ENCODE measurements at regions of chr15 and their contacts with region 1.

Region 1: GRCh38 chr15:89206908-89207331 is 14.5 kb downstream of the RLBP1 start:
- DNase-seq: peak; percentile 61
- H3K4me3 Mint-ChIP-seq: no peak overlapping the region
- H3K27ac Mint-ChIP-seq: no peak overlapping the region
- H3K4me1 Mint-ChIP-seq: peaks cover 39% of the 10 kb centered on the region
- H3K27me3 Mint-ChIP-seq: peaks cover 4% of the 10 kb centered on the region

Region 2: GRCh38 chr15:88849376-88850072 is 357.4 kb before region 1 on chr15:
- intact Hi-C with region 1: no loop called
- DNase-seq: no peak
- H3K4me3 Mint-ChIP-seq: no peak overlapping the region
- H3K27ac Mint-ChIP-seq: no peak overlapping the region
- H3K4me1 Mint-ChIP-seq: peaks cover 7% of the 10 kb centered on the region
- H3K27me3 Mint-ChIP-seq: no peaks in the 10 kb centered on the region

Region 3: DNA sequence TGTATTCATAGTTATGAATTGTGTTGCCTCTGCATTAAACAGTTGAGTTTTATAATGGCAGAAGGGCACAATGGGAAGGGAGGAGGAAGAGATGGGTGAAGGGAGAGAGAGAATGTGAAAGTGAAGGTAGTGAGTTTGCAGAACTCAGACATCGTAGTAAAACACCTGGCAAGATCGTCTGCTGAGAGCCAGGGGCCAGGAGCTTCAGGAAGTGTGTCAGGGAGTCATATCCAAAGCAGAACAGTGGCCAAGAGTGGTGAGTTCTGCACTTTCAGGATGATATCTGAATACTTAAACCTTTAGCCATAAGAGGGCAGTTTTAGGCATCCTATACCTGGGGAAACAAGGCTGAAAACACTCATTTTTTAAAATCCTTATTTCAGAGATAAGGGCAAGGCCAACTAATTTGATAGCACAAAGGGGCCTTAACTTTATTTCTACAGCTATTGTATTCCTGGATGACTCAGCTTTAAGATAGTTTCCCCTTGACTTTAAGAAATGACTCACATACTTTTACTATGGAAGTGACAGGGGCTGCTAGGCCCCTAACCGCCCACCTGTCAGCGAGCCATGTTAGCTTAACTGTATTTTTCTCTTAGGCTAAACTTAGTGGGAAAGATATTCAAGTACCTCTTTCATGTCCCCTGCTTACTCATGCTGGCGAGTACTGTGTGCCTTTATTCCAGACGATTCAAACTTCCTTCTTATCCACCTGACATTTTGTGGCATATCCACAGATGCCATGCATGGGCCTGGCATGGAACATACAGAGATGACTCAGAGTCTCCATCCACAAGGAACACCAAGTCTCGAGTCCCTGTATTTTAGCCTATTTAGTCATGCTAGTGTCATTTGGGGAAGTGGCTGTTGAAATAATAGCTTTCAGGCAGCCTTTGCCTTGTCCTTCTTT is 39.4 kb before region 1 on chr15:
- intact Hi-C with region 1: loop called (anchors 1 kb)
- DNase-seq: no peak
- H3K4me3 Mint-ChIP-seq: peak overlapping the region; percentile 65
- H3K27ac Mint-ChIP-seq: peak overlapping the region; percentile 90
- H3K4me1 Mint-ChIP-seq: peaks cover 31% of the 10 kb centered on the region
- H3K27me3 Mint-ChIP-seq: no peaks in the 10 kb centered on the region

Region 4: GRCh38 chr15:89243691-89244471 is 37.0 kb after region 1 on chr15 and contains the start of gene FANCI:
- intact Hi-C with region 1: loop called (anchors 1 kb)
- DNase-seq: peak; percentile 95
- H3K4me3 Mint-ChIP-seq: peak within 1 kb of the TSS; percentile 96
- H3K27ac Mint-ChIP-seq: peak within 1 kb of the TSS; percentile 90
- H3K4me1 Mint-ChIP-seq: peaks cover 53% of the 10 kb centered on the region
- H3K27me3 Mint-ChIP-seq: peaks cover 9% of the 10 kb centered on the region
- total RNA-seq, gene FANCI: 167 and 172 TPM in 2 replicates

Region 5: GRCh38 chr15:89278307-89278706 is 71.4 kb after region 1 on chr15:
- intact Hi-C with region 1: loop called (anchors 5 kb)
- DNase-seq: no peak
- H3K4me3 Mint-ChIP-seq: no peak overlapping the region
- H3K27ac Mint-ChIP-seq: no peak overlapping the region
- H3K4me1 Mint-ChIP-seq: peaks cover 4% of the 10 kb centered on the region
- H3K27me3 Mint-ChIP-seq: no peaks in the 10 kb centered on the region

Region 6: GRCh38 chr15:89299896-89300295 is 93.0 kb after region 1 on chr15:
- intact Hi-C with region 1: loop called (anchors 1 kb)
- DNase-seq: no peak
- H3K4me3 Mint-ChIP-seq: no peak overlapping the region
- H3K27ac Mint-ChIP-seq: no peak overlapping the region
- H3K4me1 Mint-ChIP-seq: peaks cover 58% of the 10 kb centered on the region
- H3K27me3 Mint-ChIP-seq: no peaks in the 10 kb centered on the region

Region 7: GRCh38 chr15:89317186-89317720 is 110.3 kb after region 1 on chr15:
- intact Hi-C with region 1: loop called (anchors 5 kb)
- DNase-seq: no peak
- H3K4me3 Mint-ChIP-seq: no peak overlapping the region
- H3K27ac Mint-ChIP-seq: peak overlapping the region; percentile 73
- H3K4me1 Mint-ChIP-seq: peaks cover 33% of the 10 kb centered on the region
- H3K27me3 Mint-ChIP-seq: no peaks in the 10 kb centered on the region

Region 8: DNA sequence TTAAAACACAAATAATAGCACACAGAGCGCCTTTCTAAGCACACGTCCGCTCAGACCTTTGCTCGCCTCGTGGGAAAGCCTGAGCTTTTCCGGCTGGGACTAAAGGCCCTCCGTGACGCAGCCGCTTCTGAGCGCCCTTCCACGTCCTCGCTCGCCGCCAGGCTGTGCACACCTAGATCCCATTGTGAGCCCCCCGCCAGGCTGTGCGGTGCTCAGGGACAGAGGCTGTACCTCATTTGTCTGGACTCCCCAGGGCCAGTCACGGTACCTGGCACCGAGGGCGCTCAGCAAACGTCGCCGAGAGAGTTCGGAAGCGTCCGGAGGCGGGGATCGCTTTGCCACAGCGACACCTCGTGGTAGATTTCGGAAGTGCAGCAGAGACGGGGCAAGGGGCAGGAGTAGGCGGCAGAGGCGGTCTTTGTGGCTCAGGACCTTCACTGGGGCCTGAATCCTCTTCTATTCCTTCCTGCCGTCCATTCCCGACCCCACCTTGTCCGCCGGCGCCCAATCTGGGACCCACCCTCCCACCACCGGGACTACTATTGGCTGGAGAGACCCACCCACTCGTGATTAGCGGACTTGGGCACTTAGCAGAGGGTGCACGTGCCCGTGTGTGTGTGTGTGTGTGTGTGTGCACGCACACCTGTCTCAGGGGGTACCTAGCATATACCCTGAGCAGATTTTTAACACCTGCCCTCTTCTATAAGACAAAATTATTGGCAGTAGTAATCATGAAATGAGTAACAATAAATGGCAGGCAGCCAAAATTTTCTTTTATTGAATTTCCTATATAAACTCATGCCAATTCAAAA is 223.8 kb after region 1 on chr15:
- intact Hi-C with region 1: loop called (anchors 1 kb)
- DNase-seq: peak; percentile 78
- H3K4me3 Mint-ChIP-seq: peak overlapping the region; percentile 82
- H3K27ac Mint-ChIP-seq: peak overlapping the region; percentile 2
- H3K4me1 Mint-ChIP-seq: peaks cover 7% of the 10 kb centered on the region
- H3K27me3 Mint-ChIP-seq: peaks cover 18% of the 10 kb centered on the region